ENCODE measurements at regions of chr17 and their contacts with region 1.

Region 1: DNA sequence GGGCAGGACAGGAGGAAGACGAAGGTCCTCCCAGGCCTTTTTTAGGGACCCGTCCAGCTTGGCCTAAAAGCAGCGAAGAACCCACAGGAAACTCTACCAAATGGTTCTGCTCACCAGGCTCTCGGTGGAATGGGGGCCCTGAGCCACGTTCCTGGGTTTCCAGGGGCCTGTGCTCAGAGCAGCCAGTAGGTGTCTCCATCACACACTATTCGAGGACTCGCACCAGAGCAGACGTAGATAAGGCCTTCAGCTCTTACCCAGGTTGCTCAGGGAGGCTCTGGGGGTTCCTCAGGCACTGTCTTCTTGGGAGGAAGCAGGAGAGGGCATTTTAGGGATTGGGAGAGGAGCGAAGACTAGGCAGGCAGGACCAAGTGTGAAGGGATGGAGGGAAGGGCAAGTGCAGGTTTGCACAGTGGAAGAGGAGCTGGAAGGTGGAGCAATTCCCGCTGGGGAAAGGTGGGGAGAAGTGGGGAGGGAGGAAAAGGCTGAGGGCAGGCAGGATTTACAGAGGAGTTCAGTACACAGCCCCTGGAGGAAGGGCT is 157.1 kb downstream of the RGS9 start:
- DNase-seq: peak; percentile 67
- ATAC-seq: peak; percentile 93

Region 2: GRCh38 chr17:66165513-66166123 is 871.4 kb after region 1 on chr17:
- intact Hi-C with region 1: loop called (anchors 5 kb)
- DNase-seq: no peak
- ATAC-seq: no peak

Measured in sciatic nerve (tissue), 2 donors.